ENCODE measurements at regions of chr4 and their contacts with region 1.

Region 1: GRCh38 chr4:3346146-3346545 is 53.3 kb downstream of the RGS12 start:
- DNase-seq: peak in 2 of 6 donors; percentile 35 to 66
- ATAC-seq: peak; percentile 87 to 95 (median 94)
- H3K4me3 ChIP-seq: no peak overlapping the region
- H3K27ac ChIP-seq: no peak overlapping the region
- H3K4me1 ChIP-seq: peaks cover 0 to 7% (median 6%) of the 10 kb centered on the region in 3 donors
- H3K27me3 ChIP-seq: no peaks in the 10 kb centered on the region
- CTCF ChIP-seq: peak; percentile 65 to 92 (median 80)

Region 2: GRCh38 chr4:3442959-3443749 is 97.0 kb after region 1 on chr4:
- intact Hi-C with region 1: loop called in 1 of 3 experiments (anchors 10 kb)
- DNase-seq: peak in 3 of 6 donors; percentile 56 to 87 (median 85)
- ATAC-seq: peak; percentile 64 to 85 (median 78)
- H3K4me3 ChIP-seq: no peak overlapping the region
- H3K27ac ChIP-seq: no peak overlapping the region
- H3K4me1 ChIP-seq: no peaks in the 10 kb centered on the region
- H3K27me3 ChIP-seq: no peaks in the 10 kb centered on the region
- CTCF ChIP-seq: peak; percentile 91 to 97 (median 93)

Region 3: DNA sequence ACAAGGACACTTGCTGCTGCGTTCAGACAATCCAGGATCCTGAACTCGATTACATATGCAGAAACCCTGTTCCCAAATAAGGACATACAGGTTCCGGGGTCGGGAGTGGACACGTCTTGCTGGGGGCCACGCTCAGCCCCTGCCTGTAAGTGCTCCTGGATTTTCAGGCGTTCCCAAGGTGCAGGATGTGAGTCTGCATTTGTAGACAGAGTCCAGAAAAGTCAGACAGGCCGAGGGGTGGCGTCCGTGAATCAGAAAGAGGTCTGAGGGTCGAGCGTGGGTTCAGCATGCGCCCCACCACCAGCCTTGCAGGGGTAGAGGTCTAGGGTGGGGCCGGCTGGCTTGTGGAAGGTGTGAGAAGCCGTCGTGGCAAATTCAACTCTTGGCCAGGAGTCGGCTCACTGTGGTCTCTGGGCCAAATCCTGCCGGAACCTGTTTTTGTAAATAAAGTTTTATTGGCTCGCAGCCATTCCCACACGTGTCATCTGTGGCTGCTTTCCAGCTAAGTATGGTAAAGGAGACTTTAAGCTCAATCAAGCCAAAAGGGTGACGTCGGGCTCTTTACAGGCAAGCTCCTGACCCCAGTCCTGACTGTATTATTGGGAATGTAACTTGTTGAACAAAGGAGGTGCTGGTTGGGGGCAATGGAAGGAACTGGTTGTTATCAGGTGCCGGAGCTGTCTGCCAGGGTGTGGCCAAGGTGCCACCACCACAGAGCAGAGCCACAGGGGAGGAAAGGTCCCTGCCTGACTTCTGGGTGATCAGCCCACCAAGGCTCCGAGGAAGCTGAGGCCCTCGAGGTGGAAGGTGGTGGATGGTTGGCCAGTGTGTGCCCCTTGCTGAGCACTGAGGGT is 124.3 kb after region 1 on chr4:
- intact Hi-C with region 1: loop called in 1 of 3 experiments (anchors 10 kb)
- DNase-seq: peak; percentile 52 to 82 (median 75)
- ATAC-seq: peak; percentile 18 to 42 (median 28)
- H3K4me3 ChIP-seq: no peak overlapping the region
- H3K27ac ChIP-seq: peak overlapping the region in 2 of 4 donors; percentile 17 to 40
- H3K4me1 ChIP-seq: peaks cover 9 to 34% (median 23%) of the 10 kb centered on the region in 3 donors
- H3K27me3 ChIP-seq: no peaks in the 10 kb centered on the region
- CTCF ChIP-seq: no peak

Region 4: DNA sequence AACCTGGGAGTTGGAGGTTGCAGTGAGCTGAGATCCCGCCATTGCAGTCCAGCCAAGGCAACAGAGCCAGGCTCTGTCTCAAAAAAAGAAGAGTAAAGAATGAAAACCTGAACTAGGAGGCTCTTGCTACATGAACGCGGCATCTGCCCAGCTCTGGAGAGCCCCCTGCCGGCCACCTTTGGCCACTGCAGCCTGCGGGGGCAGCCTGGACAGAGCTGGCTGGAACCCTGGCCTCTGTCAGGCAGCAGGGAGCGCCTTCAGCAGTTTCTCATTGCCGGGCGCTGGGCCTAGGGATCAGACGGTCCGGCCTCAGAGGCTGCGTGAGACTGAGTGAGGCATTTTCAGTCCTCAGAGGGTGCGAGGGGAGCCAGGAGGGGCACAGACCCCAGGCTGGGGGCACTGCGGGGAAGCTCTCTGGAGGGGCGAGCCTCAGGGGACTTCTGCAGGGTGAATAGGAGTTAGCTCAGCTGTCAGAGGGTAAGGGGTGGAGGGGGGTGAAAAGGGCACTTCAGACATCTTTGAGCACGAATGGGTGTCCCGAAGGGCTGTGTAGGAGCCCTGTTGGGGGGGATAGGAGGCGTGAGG is 134.5 kb after region 1 on chr4:
- intact Hi-C with region 1: loop called in 2 of 3 experiments (anchors 5 to 10 kb)
- DNase-seq: peak; percentile 42 to 96 (median 81)
- ATAC-seq: peak; percentile 67 to 90 (median 84)
- H3K4me3 ChIP-seq: no peak overlapping the region
- H3K27ac ChIP-seq: no peak overlapping the region
- H3K4me1 ChIP-seq: no peaks in the 10 kb centered on the region
- H3K27me3 ChIP-seq: no peaks in the 10 kb centered on the region
- CTCF ChIP-seq: peak; percentile 98 to 100 (median 100)